ENCODE measurements at regions of chr1 and their contacts with region 1.

Region 1: GRCh38 chr1:12078938-12079861 is 16.1 kb downstream of the TNFRSF8 start:
- DNase-seq: peak; percentile 76
- ATAC-seq: peak; percentile 79
- H3K4me3 Mint-ChIP-seq: peak overlapping the region; percentile 54
- H3K27ac Mint-ChIP-seq: peak overlapping the region; percentile 76
- H3K4me1 Mint-ChIP-seq: peaks cover 38% of the 10 kb centered on the region
- H3K27me3 Mint-ChIP-seq: no peaks in the 10 kb centered on the region
- CTCF ChIP-seq: 0 out of 2 replicates have a peak, but pooled peaks have one; percentile 39

Region 2: DNA sequence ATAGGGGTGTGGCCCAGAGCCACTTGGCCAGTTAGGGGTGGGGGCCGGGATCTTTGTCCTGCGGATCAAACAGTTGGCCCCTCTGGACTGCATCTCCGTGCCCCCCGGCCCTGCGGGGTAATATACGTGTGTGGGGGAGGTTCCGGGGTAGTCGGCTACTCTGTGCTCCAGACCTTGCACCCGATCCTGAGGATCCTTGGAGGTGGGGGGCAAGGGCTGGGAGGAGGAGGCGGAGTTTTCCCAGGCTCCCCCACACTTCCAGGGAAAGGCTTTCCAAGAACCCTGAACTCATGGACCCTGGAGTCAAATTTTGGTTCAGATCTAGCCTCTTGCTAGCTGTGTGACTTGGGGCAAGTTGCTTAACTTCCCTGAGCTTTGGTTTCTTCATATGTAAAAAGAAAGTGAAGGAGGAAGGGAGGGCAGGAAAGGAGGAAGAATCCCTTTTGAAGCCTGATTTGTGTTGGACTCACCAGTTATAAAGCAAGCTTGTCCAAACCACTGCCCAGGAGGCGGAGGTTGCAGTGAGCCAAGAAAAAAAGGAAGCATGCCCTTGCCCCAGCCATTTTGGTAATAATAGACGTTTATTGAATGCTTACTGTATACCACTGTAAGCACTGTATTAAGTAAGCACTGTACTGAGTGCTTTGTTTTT is 59.2 kb before region 1 on chr1:
- CTCF ChIA-PET with region 1: interaction called, 29 read pairs
- POLR2A ChIA-PET with region 1: interaction called, 7 read pairs
- DNase-seq: no peak
- ATAC-seq: no peak
- H3K4me3 Mint-ChIP-seq: peak overlapping the region; percentile 88
- H3K27ac Mint-ChIP-seq: peak overlapping the region; percentile 79
- H3K4me1 Mint-ChIP-seq: peaks cover 4% of the 10 kb centered on the region
- H3K27me3 Mint-ChIP-seq: no peaks in the 10 kb centered on the region; the same call in 1 of the 2 replicates
- CTCF ChIP-seq: no peak

Region 3: GRCh38 chr1:12031039-12031980 is 47.9 kb before region 1 on chr1:
- CTCF ChIA-PET with region 1: interaction called, 20 read pairs
- POLR2A ChIA-PET with region 1: no interaction called
- DNase-seq: peak; percentile 72
- ATAC-seq: peak; percentile 84
- H3K4me3 Mint-ChIP-seq: no peak overlapping the region
- H3K27ac Mint-ChIP-seq: no peak overlapping the region
- H3K4me1 Mint-ChIP-seq: no peaks in the 10 kb centered on the region
- H3K27me3 Mint-ChIP-seq: no peaks in the 10 kb centered on the region
- CTCF ChIP-seq: no peak; the same call in 1 of the 2 replicates

Region 4: DNA sequence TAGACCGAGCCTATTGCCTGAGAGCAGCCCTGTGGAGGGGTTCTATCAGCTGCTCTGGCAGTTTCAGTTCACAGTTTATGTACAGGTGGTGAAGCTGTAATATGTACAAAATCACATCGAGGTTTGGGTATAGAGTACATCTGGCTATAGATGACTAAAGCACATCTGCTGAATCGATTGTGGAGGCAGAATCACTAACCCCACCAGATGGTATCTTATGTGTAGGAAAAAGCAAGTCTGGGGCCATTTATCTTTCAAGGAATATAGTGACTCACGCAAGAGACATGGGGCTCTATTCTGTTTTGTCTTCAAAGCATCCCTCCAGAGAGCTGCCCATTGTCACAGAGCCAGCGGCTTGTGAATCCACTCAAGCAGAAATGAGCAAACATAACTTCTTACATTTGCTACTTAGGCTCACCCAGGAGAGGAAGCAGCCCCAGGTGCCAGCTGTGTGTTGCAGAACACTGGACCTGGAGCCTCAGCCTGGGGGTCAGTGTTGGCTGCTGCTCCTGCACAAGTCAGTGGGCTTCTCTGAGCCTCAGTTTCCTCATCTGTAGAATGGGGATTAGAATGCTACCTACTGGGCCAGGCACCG is 38.6 kb before region 1 on chr1:
- CTCF ChIA-PET with region 1: interaction called, 15 read pairs
- POLR2A ChIA-PET with region 1: no interaction called
- DNase-seq: no peak
- ATAC-seq: no peak
- H3K4me3 Mint-ChIP-seq: no peak overlapping the region
- H3K27ac Mint-ChIP-seq: no peak overlapping the region
- H3K4me1 Mint-ChIP-seq: no peaks in the 10 kb centered on the region
- H3K27me3 Mint-ChIP-seq: no peaks in the 10 kb centered on the region; the same call in 1 of the 2 replicates
- CTCF ChIP-seq: no peak

Region 5: DNA sequence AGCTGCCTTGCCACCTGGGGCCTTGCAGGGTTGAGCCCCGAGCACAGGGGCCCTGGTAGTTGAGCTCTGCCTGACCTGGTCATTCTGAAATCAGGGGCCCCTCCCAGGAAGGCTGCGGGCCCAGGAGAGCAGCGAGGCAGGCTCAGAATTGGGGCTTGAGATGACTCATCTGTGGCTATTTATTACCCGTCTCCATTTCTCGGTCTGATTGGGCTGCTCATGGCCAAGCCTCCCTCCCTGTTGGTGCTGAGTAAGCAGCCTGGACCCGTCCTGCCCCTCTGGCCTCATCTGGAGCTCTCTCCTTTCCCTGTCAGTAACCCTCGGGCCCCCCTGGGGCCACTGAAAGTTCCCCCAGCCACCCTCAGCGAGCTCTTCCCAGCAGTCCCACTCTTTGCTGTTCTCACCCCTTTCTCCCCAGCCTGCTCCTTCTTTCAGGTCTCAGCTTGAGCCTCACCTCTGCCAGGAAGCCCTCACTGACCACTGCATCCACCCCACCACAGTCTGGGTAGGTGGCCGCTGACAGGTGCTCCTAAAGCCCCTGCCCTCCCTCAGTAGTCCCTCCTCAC is 27.1 kb before region 1 on chr1:
- CTCF ChIA-PET with region 1: interaction called, 20 read pairs
- POLR2A ChIA-PET with region 1: no interaction called
- DNase-seq: no peak
- ATAC-seq: peak; percentile 26; the same call in 1 of the 2 replicates
- H3K4me3 Mint-ChIP-seq: no peak overlapping the region
- H3K27ac Mint-ChIP-seq: peak overlapping the region; percentile 2; the same call in 1 of the 2 replicates
- H3K4me1 Mint-ChIP-seq: peaks cover 17% of the 10 kb centered on the region
- H3K27me3 Mint-ChIP-seq: no peaks in the 10 kb centered on the region
- CTCF ChIP-seq: no peak

Region 6: DNA sequence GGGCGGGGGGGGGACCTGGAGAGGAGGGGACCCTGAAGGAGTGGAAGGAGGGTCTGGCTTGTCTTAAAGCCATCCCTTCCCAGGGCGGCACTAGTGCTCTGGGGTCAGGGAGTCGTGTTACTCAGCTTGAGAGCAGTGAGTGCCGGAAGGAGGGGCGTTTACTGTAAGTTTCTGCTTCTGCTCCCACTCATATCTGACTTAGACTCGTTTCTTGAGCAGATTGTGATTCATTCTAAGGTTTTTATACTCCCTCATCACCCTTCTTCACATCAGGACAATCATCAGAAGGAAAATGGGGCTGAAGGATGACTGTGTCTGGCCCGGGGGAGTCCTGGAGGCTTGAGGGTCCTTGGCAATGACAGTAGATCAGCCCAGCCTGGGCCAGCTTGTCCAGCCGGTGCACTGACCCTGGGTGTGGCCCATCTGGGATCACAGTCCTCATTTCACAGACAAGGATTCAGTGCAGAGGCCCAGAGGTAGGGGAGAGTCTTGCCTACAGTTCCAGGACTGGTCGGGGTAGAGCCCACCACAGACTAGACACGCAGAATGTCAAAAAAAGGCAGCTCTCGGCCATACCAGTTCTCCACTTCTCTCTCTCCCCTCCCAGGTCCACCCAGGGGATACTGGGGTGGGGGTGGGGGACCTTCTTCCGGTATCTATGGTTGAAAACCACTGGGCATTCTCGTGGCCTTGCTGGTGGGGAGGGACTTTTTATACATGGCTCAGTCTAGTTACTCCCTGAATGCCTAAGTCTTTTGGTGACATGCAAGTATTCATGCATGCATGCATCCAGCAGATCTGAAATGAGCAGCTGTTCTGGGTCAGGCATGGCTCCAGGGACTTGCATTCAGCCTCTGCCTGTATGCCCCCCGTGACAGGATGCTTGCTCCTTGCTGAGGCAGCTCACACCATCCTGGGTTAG is 11.0 kb before region 1 on chr1:
- CTCF ChIA-PET with region 1: interaction called, 57 read pairs
- POLR2A ChIA-PET with region 1: interaction called, 16 read pairs
- DNase-seq: peak; percentile 63
- ATAC-seq: peak; percentile 76
- H3K4me3 Mint-ChIP-seq: peak overlapping the region; percentile 51
- H3K27ac Mint-ChIP-seq: peak overlapping the region; percentile 96
- H3K4me1 Mint-ChIP-seq: peaks cover 57% of the 10 kb centered on the region
- H3K27me3 Mint-ChIP-seq: peaks cover 12% of the 10 kb centered on the region
- CTCF ChIP-seq: no peak

Region 7: GRCh38 chr1:12095452-12096263 is 16.5 kb after region 1 on chr1:
- CTCF ChIA-PET with region 1: interaction called, 10 read pairs
- POLR2A ChIA-PET with region 1: no interaction called
- DNase-seq: no peak
- ATAC-seq: peak; percentile 79
- H3K4me3 Mint-ChIP-seq: no peak overlapping the region
- H3K27ac Mint-ChIP-seq: peak overlapping the region; percentile 61; the same call in 1 of the 2 replicates
- H3K4me1 Mint-ChIP-seq: no peaks in the 10 kb centered on the region
- H3K27me3 Mint-ChIP-seq: no peaks in the 10 kb centered on the region
- CTCF ChIP-seq: no peak